IMR-90 (cell line): ENCODE measurements at regions of chr15 and their contacts with region 1.

Region 1: GRCh38 chr15:61122647-61123375 is 106.3 kb downstream of the RORA start:
- DNase-seq: no peak
- ATAC-seq: no peak
- H3K4me3 ChIP-seq: no peak overlapping the region
- H3K27ac ChIP-seq: no peak overlapping the region
- H3K4me1 ChIP-seq: no peaks in the 10 kb centered on the region
- H3K27me3 ChIP-seq: peaks cover 7% of the 10 kb centered on the region; the same call in 1 of the 2 replicates
- CTCF ChIP-seq: no peak
- POLR2A ChIP-seq: no peak
- RAD21 ChIP-seq: no peak

Region 2: GRCh38 chr15:61069394-61070075 is 53.3 kb before region 1 on chr15:
- CTCF ChIA-PET with region 1: no interaction called
- POLR2A ChIA-PET with region 1: no interaction called
- dilution Hi-C with region 1: no loop called
- in situ Hi-C with region 1: loop called (anchors 10 kb)
- intact Hi-C with region 1: no loop called
- DNase-seq: peak; percentile 4
- ATAC-seq: no peak
- H3K4me3 ChIP-seq: no peak overlapping the region
- H3K27ac ChIP-seq: no peak overlapping the region
- H3K4me1 ChIP-seq: no peaks in the 10 kb centered on the region
- H3K27me3 ChIP-seq: peaks cover 7% of the 10 kb centered on the region
- CTCF ChIP-seq: no peak
- POLR2A ChIP-seq: no peak
- RAD21 ChIP-seq: no peak